ENCODE measurements at regions of chr9 and their contacts with region 1.

Region 1: DNA sequence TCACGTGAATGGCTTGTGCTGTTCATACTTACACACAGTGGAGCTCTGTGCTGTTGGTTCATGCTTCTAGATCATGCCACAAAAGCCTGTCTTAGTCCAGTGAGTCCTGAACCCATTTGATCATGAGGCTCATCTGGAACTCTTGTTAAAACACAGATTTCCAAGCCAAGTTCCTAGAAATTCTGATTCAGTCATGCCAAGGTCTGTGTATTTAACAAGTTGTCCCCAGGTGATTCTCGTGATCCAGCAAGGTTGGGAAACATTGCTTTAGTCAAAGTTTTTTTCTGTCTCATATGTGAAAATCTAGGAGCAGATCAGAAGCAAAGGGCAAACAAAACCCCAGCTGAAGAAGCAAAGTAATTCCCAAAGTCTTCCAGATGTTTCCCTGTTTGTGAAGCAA is 112.5 kb upstream of the GAS1 start:
- DNase-seq: no peak
- ATAC-seq: no peak
- H3K4me3 ChIP-seq: no peak overlapping the region
- H3K27ac ChIP-seq: no peak overlapping the region
- H3K4me1 ChIP-seq: no peaks in the 10 kb centered on the region
- H3K27me3 ChIP-seq: no peaks in the 10 kb centered on the region
- CTCF ChIP-seq: no peak

Region 2: DNA sequence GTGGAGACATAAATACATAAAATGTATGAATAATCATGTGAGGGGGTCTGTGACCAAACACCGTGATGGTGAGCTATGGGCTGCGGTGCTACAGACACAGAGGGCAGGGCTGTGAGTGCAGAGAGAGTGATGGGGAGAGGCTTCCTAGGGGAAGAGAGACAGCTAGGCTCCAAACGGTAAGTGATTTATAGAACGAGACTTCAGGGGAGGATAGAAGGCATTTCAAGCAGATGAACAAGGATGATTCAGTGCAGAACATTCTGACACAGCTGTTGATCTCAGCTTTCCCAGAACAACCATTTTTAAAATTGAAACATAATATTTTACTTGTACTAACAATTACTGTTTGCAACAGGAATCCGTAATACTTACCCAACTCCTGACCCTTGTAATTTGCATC is 213.1 kb before region 1 on chr9:
- CTCF ChIA-PET with region 1: no interaction called
- POLR2A ChIA-PET with region 1: no interaction called
- in situ Hi-C with region 1: no loop called
- intact Hi-C with region 1: no loop called
- DNase-seq: no peak
- ATAC-seq: no peak
- H3K4me3 ChIP-seq: no peak overlapping the region
- H3K27ac ChIP-seq: no peak overlapping the region
- H3K4me1 ChIP-seq: no peaks in the 10 kb centered on the region
- H3K27me3 ChIP-seq: no peaks in the 10 kb centered on the region
- CTCF ChIP-seq: no peak

Region 3: GRCh38 chr9:87007711-87008366 is 51.9 kb before region 1 on chr9:
- CTCF ChIA-PET with region 1: interaction called, 14 read pairs
- POLR2A ChIA-PET with region 1: no interaction called
- in situ Hi-C with region 1: no loop called
- intact Hi-C with region 1: no loop called
- DNase-seq: no peak
- ATAC-seq: no peak
- H3K4me3 ChIP-seq: no peak overlapping the region
- H3K27ac ChIP-seq: no peak overlapping the region
- H3K4me1 ChIP-seq: no peaks in the 10 kb centered on the region
- H3K27me3 ChIP-seq: no peaks in the 10 kb centered on the region
- CTCF ChIP-seq: no peak